A673 (cell line): ENCODE measurements at regions of chr3 and their contacts with region 1.

Region 1: GRCh38 chr3:77427528-77427927 is 387.6 kb downstream of the ROBO2 start:
- DNase-seq: no peak
- H3K4me3 ChIP-seq: no peak overlapping the region
- H3K27ac ChIP-seq: peak overlapping the region; percentile 85
- H3K4me1 ChIP-seq: peaks cover 28% of the 10 kb centered on the region
- H3K27me3 ChIP-seq: no peaks in the 10 kb centered on the region
- CTCF ChIP-seq: no peak

Region 2: GRCh38 chr3:77281721-77282120 is 145.8 kb before region 1 on chr3:
- CTCF ChIA-PET with region 1: no interaction called
- POLR2A ChIA-PET with region 1: no interaction called
- intact Hi-C with region 1: no loop called
- DNase-seq: peak; percentile 35
- H3K4me3 ChIP-seq: no peak overlapping the region
- H3K27ac ChIP-seq: no peak overlapping the region
- H3K4me1 ChIP-seq: peaks cover 5% of the 10 kb centered on the region
- H3K27me3 ChIP-seq: no peaks in the 10 kb centered on the region
- CTCF ChIP-seq: no peak

Region 3: GRCh38 chr3:77467702-77468625 is 40.4 kb after region 1 on chr3:
- CTCF ChIA-PET with region 1: interaction called, 4 read pairs
- POLR2A ChIA-PET with region 1: interaction called, 5 read pairs
- intact Hi-C with region 1: loop called (anchors 1 kb)
- DNase-seq: peak; percentile 79
- H3K4me3 ChIP-seq: no peak overlapping the region
- H3K27ac ChIP-seq: peak overlapping the region; percentile 86
- H3K4me1 ChIP-seq: peaks cover 50% of the 10 kb centered on the region
- H3K27me3 ChIP-seq: no peaks in the 10 kb centered on the region
- CTCF ChIP-seq: no peak